MCF 10A (cell line): ENCODE measurements at regions of chrX and their contacts with region 1.

Region 1: GRCh38 chrX:15500497-15500966 is at the start of gene BMX:
- DNase-seq: no peak
- H3K4me3 Mint-ChIP-seq: no peak within 1 kb of the TSS
- H3K27ac Mint-ChIP-seq: no peak within 1 kb of the TSS
- H3K4me1 Mint-ChIP-seq: peaks cover 8% of the 10 kb centered on the region
- H3K27me3 Mint-ChIP-seq: peaks cover 26% of the 10 kb centered on the region
- CTCF ChIP-seq: no peak
- total RNA-seq, gene BMX: not detected in 2 replicates

Region 2: DNA sequence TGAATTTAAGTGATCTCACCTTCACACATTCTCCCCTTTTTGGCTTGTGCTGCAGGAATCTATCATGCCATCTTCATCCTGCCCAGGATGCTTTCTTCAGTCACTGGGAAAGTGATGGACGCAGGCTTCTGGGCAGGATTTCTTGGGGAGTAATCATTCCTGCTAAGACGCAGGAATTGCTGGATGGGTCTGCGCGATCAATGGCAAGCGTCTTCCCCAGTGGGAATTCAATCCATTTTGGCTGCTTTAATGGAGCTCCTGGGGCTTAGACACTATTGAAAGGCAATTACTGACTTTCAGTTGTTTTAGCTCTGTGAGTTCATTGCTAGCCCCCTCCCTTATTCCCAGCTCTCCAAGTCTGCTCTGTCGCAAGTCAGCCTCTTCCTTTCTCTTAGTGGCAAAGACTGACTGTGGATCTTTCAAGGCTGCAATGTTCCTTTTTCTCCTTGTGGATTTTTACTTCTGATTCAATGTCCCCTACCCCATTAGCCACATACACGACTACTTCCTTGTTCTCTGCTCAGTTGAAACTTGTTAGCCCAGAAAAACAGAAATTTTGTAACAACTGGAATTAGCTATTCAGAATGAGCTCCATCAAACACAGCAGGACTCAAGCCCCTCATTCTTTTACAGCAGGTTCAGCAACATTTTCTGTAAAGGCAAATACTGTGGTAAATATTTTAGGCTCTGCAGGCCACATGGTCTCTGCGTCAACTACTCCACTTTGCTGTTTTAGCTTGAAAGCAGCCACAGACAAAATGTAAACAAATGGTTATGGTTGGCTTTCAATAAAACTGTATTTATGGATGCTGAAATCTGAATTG is 385.6 kb before region 1 on chrX:
- CTCF ChIA-PET with region 1: no interaction called
- POLR2A ChIA-PET with region 1: no interaction called
- intact Hi-C with region 1: no loop called
- DNase-seq: no peak
- H3K4me3 Mint-ChIP-seq: no peak overlapping the region
- H3K27ac Mint-ChIP-seq: no peak overlapping the region
- H3K4me1 Mint-ChIP-seq: no peaks in the 10 kb centered on the region
- H3K27me3 Mint-ChIP-seq: peaks cover 47% of the 10 kb centered on the region
- CTCF ChIP-seq: no peak

Region 3: DNA sequence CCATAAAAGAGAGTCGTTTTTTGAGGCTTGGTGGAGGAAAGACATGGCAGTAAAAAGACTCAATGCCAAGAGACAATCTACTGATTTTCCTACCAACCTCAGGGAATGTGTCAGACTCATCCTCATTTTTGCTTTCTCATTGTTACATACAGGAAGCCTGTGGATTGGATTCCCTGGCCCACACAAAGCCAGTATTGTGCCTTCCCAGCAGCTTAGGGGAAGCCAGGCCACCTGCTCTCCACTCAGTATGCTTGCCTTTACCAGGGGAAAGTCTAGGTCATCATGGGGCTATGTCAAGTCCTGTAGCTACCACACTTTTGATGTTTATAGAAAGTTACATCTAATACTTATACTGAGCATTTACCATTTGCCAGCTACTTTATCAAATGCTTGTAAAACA is 11.0 kb after region 1 on chrX:
- CTCF ChIA-PET with region 1: interaction called, 13 read pairs
- POLR2A ChIA-PET with region 1: interaction called, 4 read pairs
- intact Hi-C with region 1: no loop called
- DNase-seq: no peak
- H3K4me3 Mint-ChIP-seq: no peak overlapping the region
- H3K27ac Mint-ChIP-seq: no peak overlapping the region
- H3K4me1 Mint-ChIP-seq: no peaks in the 10 kb centered on the region
- H3K27me3 Mint-ChIP-seq: peaks cover 25% of the 10 kb centered on the region
- CTCF ChIP-seq: no peak